ENCODE measurements at regions of chr12 and their contacts with region 1.

Region 1: DNA sequence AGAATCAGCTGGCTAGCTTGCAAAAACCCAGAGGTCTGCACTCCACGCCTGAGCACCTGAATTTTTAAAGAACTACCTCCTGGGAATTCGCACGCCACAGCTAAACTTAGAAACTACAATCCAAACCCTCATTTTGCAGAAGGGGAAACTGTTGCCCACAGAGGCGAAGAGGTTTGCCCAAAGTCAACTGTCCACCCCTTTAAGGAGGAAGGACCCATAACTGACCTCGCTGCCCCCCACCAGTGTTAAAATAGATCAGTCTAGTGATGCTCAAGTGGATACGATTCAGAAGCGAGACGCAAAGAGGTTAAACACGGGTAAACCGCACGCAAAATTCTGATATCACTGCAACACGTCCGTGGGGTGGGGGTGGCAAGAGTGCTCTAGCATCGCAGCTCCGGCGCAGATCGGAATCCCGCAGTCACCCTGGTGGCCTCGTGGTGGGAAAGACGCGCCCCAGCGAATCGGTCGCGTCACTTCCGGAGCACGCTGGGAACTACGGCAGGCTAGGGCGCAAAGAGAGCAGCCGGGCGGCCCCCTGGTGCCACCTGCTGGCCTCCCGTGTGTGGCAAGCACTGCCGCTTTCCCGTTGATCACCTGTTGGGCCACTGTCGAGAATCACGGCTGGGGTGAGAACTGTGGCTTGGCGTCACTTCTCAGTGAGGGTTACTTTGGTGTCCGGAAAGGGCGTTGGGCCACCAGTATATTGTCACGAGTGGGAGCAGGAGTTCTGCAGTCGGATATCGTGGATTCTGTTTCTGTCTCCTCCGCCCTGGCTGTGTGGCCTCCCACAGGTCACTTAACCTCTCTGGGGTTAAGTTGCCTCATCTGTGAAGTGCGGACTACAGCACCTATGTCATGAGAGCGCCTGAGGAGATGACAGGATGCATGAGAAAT is at the start of gene ALKBH2:
- DNase-seq: peak; percentile 89
- ATAC-seq: peak; percentile 58
- H3K4me3 ChIP-seq: peak within 1 kb of the TSS; percentile 57
- H3K27ac ChIP-seq: peak within 1 kb of the TSS; percentile 43
- H3K4me1 ChIP-seq: peaks cover 7% of the 10 kb centered on the region
- H3K27me3 ChIP-seq: no peaks in the 10 kb centered on the region
- CTCF ChIP-seq: peak; percentile 99
- POLR2A ChIP-seq: peak; percentile 67
- RAD21 ChIP-seq: peak; percentile 96
- total RNA-seq, gene ALKBH2: 14.9 and 18.3 TPM in 2 replicates

Region 2: DNA sequence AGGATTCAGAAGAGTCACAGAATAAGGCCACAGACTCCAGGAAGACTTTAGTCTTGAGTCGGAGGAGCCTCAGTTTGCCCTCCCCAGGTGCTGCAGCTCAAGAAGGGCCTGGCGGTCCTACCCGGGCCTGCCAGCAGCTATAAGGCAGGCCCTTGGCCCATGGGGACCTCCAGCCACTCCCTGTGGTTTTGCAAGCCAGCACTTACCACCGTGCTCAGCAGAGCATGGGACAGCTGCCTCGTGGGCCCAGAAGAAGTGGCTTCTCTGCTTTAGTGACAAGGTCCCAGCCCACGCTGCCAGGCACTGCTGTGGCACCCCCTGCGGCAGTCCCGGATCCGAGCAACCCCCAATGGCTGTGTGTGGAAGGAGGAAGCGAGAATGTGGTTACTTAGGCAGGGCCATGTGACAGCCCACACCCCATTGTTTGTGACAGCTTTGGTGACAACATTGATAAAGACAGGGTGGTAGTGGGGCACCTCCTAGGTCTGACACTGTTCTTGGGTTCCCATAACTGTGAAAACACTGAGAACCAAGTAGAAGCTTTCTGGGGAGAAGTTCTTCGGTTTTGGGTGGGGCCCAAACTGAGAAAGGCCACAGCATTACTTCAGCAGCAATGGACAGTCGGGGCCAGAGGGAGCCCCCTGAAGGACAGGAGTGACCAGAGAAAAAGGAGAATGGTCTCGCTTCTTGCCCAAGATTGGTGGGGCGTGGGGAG is 459.6 kb before region 1 on chr12 and contains the start of gene SELPLG:
- CTCF ChIA-PET with region 1: interaction called, 3 read pairs
- POLR2A ChIA-PET with region 1: no interaction called
- dilution Hi-C with region 1: no loop called
- in situ Hi-C with region 1: loop called (anchors 25 kb)
- intact Hi-C with region 1: loop called (anchors 5 kb)
- DNase-seq: no peak
- ATAC-seq: no peak
- H3K4me3 ChIP-seq: no peak within 1 kb of the TSS
- H3K27ac ChIP-seq: no peak within 1 kb of the TSS
- H3K4me1 ChIP-seq: peaks cover 31% of the 10 kb centered on the region
- H3K27me3 ChIP-seq: no peaks in the 10 kb centered on the region
- CTCF ChIP-seq: no peak
- POLR2A ChIP-seq: no peak
- RAD21 ChIP-seq: no peak
- total RNA-seq, gene SELPLG: 2.8 and 3.2 TPM in 2 replicates

Region 3: DNA sequence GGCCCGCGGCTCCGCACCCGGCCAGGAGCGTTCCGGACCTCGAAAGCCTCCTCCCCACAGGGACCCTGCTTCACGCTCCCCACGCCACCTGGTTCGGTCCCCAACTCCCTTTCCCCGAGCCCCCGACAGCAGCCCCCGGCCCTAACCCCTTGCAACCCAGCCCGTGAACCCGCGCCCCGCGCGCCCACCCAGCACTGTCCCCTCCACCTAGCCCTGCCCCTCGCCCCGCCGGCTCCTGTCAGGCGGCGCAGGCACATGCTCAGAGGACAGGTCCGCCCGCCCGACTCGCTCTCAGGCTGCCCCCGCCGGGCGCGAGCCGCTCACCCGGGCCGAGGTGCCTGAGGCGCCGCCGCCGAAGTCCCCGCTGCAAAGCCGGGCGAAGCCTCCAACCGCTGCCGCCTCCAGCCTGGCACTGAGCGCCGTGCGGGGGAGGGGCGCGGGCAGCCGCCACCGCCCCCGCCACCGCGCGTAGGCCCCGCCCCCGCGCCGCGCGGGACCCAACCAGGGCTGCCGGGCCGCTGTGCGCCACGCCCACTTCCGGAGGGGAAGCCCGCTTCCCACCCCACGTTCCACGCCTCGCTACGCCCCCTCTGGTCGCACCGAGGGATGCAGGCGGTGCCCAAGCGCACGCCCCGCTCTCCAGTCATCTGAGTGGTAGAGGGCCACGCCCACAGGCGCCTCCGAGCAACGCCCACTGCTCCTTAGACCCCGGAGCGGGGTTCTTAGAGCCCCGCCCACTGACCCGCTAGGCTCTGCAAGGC is 362.0 kb before region 1 on chr12 and contains the start of gene CORO1C:
- CTCF ChIA-PET with region 1: no interaction called
- POLR2A ChIA-PET with region 1: no interaction called
- dilution Hi-C with region 1: no loop called
- in situ Hi-C with region 1: no loop called
- intact Hi-C with region 1: loop called (anchors 5 kb)
- DNase-seq: peak; percentile 93
- ATAC-seq: peak; percentile 80
- H3K4me3 ChIP-seq: peak within 1 kb of the TSS; percentile 90
- H3K27ac ChIP-seq: peak within 1 kb of the TSS; percentile 99
- H3K4me1 ChIP-seq: peaks cover 8% of the 10 kb centered on the region; the same call in 1 of the 2 replicates
- H3K27me3 ChIP-seq: no peaks in the 10 kb centered on the region
- CTCF ChIP-seq: peak; percentile 95
- POLR2A ChIP-seq: peak; percentile 96
- RAD21 ChIP-seq: peak; percentile 47
- total RNA-seq, gene CORO1C: 1,042 and 1,100 TPM in 2 replicates

Region 4: GRCh38 chr12:108856428-108857157 is 236.7 kb before region 1 on chr12:
- CTCF ChIA-PET with region 1: no interaction called
- POLR2A ChIA-PET with region 1: no interaction called
- dilution Hi-C with region 1: no loop called
- in situ Hi-C with region 1: no loop called
- intact Hi-C with region 1: loop called (anchors 10 kb)
- DNase-seq: peak; percentile 87
- ATAC-seq: peak; percentile 12
- H3K4me3 ChIP-seq: peak overlapping the region; percentile 93
- H3K27ac ChIP-seq: peak overlapping the region; percentile 100
- H3K4me1 ChIP-seq: peaks cover 28% of the 10 kb centered on the region
- H3K27me3 ChIP-seq: no peaks in the 10 kb centered on the region
- CTCF ChIP-seq: no peak
- POLR2A ChIP-seq: peak; percentile 97
- RAD21 ChIP-seq: no peak

Region 5: DNA sequence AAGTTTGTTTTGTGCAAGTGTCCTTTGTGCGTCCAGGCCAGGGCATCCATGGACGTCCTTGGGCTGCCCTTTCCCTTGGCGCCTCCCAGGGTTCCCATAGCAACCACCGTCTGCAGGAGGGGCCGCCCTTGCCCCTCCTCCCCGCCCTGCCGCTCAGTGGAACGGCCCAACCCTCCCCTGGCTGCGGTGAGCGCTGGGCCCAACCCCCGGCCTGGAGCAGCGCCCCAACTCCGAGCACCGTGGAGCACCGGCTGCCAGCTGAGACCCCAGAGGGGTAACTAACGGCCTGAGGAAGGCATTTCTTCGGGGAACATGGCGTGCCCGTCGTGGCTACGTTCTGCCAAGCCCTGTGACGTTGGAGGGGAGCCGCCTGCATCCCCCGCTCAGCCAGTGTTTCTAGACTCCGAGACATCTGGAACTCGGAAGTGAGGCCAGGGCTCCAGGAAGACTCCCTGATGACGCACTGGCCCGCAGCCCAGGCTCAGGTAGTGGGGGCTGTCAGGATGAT is 17.8 kb after region 1 on chr12:
- CTCF ChIA-PET with region 1: interaction called, 10 read pairs
- POLR2A ChIA-PET with region 1: interaction called, 3 read pairs
- dilution Hi-C with region 1: no loop called
- in situ Hi-C with region 1: no loop called
- intact Hi-C with region 1: no loop called
- DNase-seq: peak; percentile 70
- ATAC-seq: peak; percentile 97
- H3K4me3 ChIP-seq: peak overlapping the region; percentile 68
- H3K27ac ChIP-seq: peak overlapping the region; percentile 78
- H3K4me1 ChIP-seq: no peaks in the 10 kb centered on the region
- H3K27me3 ChIP-seq: no peaks in the 10 kb centered on the region
- CTCF ChIP-seq: no peak
- POLR2A ChIP-seq: peak; percentile 21; the same call in 1 of the 2 replicates
- RAD21 ChIP-seq: no peak

Measured in IMR-90 (cell line).